ENCODE measurements at regions of chr3 and their contacts with region 1.

Region 1: DNA sequence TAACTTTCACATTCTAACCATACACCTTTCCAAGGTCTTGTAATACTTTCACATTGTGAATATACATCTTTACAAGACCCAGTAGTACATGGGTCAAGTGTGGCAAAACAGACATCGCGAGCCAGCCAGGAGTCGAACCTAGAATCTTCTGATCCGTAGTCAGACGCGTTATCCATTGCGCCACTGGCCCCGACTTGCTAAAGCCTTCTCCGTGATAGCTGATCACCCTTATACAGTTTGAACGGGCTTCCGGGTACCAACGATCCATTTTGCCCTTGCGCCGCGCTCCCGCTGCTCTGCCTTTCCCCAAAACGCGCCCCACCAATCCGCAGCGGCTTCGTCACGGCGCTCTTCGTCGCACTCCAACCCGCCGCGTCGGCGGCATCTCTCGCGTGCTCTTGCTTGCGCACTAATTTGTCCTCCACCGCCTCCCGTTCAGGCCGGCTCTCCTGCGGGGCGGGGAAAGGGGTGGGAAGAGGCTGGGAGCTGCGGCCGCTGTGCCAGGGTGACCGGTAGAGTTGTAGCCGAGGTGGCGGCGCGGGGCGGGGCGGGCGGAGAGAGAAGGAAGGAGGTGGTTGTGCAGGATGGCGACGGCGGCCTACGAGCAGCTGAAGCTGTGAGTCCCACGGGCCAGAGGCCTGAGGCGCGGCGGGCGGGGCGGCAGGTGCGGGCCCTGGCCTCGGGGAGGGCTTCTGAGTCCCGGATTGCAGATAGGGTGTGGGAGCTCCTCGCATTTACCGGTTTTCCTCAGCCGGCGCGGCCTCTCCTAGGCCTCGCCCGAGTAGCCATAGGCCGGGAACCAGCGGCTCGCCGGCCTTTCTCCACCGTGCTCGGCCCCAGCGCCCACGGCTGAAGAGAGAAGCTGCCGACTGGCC is at the start of gene SACM1L:
- DNase-seq: peak; percentile 84 to 97 (median 95)
- ATAC-seq: peak; percentile 90
- H3K4me3 ChIP-seq: peak within 1 kb of the TSS; percentile 80
- H3K4me3 Mint-ChIP-seq: peak within 1 kb of the TSS; percentile 87 to 98 (median 95)
- H3K27ac ChIP-seq: peak within 1 kb of the TSS; percentile 96
- H3K27ac Mint-ChIP-seq: peak within 1 kb of the TSS; percentile 96 to 100 (median 99)
- H3K4me1 ChIP-seq: peaks cover 38 to 39% of the 10 kb centered on the region in 2 donors
- H3K4me1 Mint-ChIP-seq: peaks cover 40 to 74% (median 67%) of the 10 kb centered on the region in 7 donors
- H3K27me3 ChIP-seq: no peaks in the 10 kb centered on the region
- H3K27me3 Mint-ChIP-seq: peaks cover 0 to 5% (median 0%) of the 10 kb centered on the region in 5 donors
- total RNA-seq, gene SACM1L: 60.8 to 93.8 (median 70.5) TPM

Region 2: GRCh38 chr3:44861412-44862220 is 827.5 kb before region 1 on chr3 and contains the start of gene TMEM42:
- CTCF ChIA-PET with region 1: no interaction called
- POLR2A ChIA-PET with region 1: no interaction called
- intact Hi-C with region 1: loop called in 1 of 2 experiments (anchors 10 kb)
- DNase-seq: peak; percentile 81 to 89 (median 84)
- ATAC-seq: peak; percentile 97
- H3K4me3 ChIP-seq: peak within 1 kb of the TSS; percentile 78
- H3K4me3 Mint-ChIP-seq: peak within 1 kb of the TSS; percentile 88 to 92 (median 91)
- H3K27ac ChIP-seq: peak within 1 kb of the TSS; percentile 76
- H3K27ac Mint-ChIP-seq: peak within 1 kb of the TSS; percentile 86 to 97 (median 92)
- H3K4me1 ChIP-seq: peaks cover 15 to 29% of the 10 kb centered on the region in 2 donors
- H3K4me1 Mint-ChIP-seq: peaks cover 23 to 48% (median 43%) of the 10 kb centered on the region in 7 donors
- H3K27me3 ChIP-seq: no peaks in the 10 kb centered on the region
- H3K27me3 Mint-ChIP-seq: no peaks in the 10 kb centered on the region
- total RNA-seq, gene TMEM42: 12.1 to 25.1 (median 16.4) TPM

Region 3: DNA sequence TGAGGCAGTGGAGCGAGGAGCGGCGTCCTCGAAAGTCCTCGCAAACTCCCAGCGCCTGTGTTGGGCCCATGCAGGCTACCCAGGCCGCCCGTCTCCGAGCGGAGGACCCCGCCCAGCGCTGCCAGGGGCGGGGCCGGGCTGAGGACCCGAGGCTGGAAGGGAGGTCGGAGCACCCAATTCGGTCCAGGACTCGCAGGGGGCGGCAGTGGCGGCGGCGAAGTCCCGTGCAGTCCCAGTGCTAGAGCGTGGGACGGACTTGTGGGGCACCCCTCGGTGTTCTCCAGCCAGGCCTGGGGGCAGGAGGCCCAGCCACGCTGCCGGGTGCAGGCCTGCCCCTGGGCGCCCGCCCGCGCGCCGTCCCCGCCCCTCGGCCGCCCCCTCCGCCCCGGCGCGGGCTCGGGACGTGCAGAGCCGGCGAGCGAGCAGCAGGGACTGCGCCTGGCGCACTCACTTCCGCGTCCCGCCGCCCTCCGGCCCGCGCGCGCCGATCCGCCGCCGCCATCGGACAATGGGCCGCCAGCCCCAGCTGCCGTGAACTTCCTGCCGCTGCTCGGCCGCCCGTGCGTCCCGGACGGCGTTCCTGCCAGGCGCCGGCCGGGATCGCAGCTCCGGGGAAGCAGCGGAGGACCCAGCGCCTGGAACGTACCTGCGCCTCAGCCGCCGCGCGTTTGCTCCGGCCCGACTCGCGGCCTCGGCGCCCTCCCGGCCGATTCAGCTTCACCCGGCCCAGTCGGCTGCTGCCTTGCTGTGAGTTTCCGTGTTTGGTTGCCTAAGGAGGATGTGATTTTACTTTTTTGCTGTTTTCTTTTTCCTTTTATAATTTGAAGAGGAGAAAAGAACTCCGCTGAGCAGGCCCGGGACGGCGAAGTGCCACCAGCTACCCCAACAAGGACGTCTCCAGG is 95.2 kb before region 1 on chr3:
- CTCF ChIA-PET with region 1: no interaction called
- POLR2A ChIA-PET with region 1: interaction called, 3 read pairs
- intact Hi-C with region 1: loop called (anchors 1 kb)
- DNase-seq: peak; percentile 46 to 83 (median 70)
- ATAC-seq: peak; percentile 83
- H3K4me3 ChIP-seq: peak overlapping the region; percentile 71
- H3K4me3 Mint-ChIP-seq: peak overlapping the region; percentile 84 to 99 (median 90)
- H3K27ac ChIP-seq: peak overlapping the region; percentile 72
- H3K27ac Mint-ChIP-seq: peak overlapping the region; percentile 85 to 96 (median 91)
- H3K4me1 ChIP-seq: peaks cover 44 to 58% of the 10 kb centered on the region in 2 donors
- H3K4me1 Mint-ChIP-seq: peaks cover 48 to 61% (median 55%) of the 10 kb centered on the region in 7 donors
- H3K27me3 ChIP-seq: no peaks in the 10 kb centered on the region
- H3K27me3 Mint-ChIP-seq: peaks cover 0 to 3% (median 0%) of the 10 kb centered on the region in 5 donors

Region 4: GRCh38 chr3:45635477-45636256 is 53.5 kb before region 1 on chr3:
- CTCF ChIA-PET with region 1: no interaction called
- POLR2A ChIA-PET with region 1: no interaction called
- intact Hi-C with region 1: no loop called
- DNase-seq: no peak
- ATAC-seq: no peak
- H3K4me3 ChIP-seq: no peak overlapping the region
- H3K4me3 Mint-ChIP-seq: no peak overlapping the region
- H3K27ac ChIP-seq: no peak overlapping the region
- H3K27ac Mint-ChIP-seq: peak overlapping the region in 4 of 9 donors; percentile 12 to 40 (median 29)
- H3K4me1 ChIP-seq: peaks cover 0 to 4% of the 10 kb centered on the region in 2 donors
- H3K4me1 Mint-ChIP-seq: peaks cover 12 to 22% (median 17%) of the 10 kb centered on the region in 7 donors
- H3K27me3 ChIP-seq: no peaks in the 10 kb centered on the region
- H3K27me3 Mint-ChIP-seq: no peaks in the 10 kb centered on the region

Region 5: DNA sequence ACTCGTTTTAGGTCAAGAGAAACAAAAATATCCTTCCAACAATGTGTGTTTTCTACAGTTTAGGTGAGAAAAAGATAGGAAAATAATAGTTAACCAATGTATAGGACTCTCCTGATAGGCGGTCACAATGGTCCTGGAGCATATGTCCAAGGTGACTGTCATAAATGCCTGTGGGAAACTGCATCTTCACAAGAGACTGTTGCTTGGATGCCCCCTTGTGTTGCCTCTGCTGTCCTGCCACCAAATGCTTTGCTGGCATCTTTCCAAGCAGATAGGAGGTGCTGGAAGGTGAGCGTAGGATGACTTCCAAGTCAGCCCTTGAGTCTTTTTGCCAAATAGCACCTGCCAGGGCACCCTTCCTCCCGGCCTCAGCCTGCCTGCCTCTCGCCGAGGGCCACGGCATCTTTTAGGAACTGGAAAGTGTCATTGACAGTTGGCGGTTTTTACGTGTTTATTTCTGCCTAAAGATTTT is 24.0 kb before region 1 on chr3:
- CTCF ChIA-PET with region 1: interaction called, 22 read pairs
- POLR2A ChIA-PET with region 1: interaction called, 31 read pairs
- intact Hi-C with region 1: loop called (anchors 1 kb)
- DNase-seq: peak in 8 of 9 donors; percentile 49 to 79 (median 75)
- ATAC-seq: peak; percentile 74
- H3K4me3 ChIP-seq: peak overlapping the region; percentile 64
- H3K4me3 Mint-ChIP-seq: peak overlapping the region; percentile 80 to 96 (median 89)
- H3K27ac ChIP-seq: peak overlapping the region; percentile 81
- H3K27ac Mint-ChIP-seq: peak overlapping the region; percentile 85 to 97 (median 92)
- H3K4me1 ChIP-seq: peaks cover 13 to 19% of the 10 kb centered on the region in 2 donors
- H3K4me1 Mint-ChIP-seq: peaks cover 15 to 49% (median 33%) of the 10 kb centered on the region in 7 donors
- H3K27me3 ChIP-seq: no peaks in the 10 kb centered on the region
- H3K27me3 Mint-ChIP-seq: no peaks in the 10 kb centered on the region

Region 6: DNA sequence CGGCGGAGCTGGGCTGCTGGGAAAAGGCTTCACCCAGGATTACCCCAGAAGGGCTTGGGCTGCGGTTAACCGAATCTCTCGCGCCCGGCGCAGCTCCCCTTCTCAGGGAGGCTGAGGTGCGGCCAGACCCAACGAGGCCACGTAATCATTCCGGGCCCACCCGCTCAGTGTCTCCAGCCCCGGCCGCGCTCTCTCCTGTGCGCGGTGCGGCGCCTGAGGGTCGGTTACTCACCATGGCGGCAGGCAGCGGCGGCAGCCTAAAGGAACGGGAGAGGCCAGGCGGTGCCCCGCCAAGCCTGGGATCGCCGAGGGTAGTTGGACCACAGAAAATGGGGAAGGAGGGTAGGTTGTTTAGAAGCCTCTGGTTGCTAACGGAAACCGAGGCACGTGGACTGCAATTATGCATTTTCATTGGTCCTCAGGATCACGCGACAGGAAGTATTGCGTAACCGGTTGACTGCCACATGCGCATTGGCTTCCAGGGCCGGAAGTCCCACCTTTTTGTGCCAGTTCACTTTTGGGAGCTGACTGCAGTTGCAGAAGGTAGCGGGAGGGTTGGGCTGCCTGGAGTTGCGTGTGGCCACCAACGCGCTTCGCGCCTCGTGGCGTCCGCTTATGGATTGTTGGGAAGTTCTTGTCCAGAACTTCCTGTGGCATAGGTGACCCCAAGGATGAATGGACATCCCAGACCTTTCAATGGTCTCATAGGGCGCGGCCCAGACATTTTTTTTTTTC is 152.8 kb after region 1 on chr3 and contains the start of gene LZTFL1:
- CTCF ChIA-PET with region 1: interaction called, 3 read pairs
- POLR2A ChIA-PET with region 1: no interaction called
- intact Hi-C with region 1: loop called (anchors 1 to 2 kb)
- DNase-seq: peak; percentile 62 to 94 (median 91)
- ATAC-seq: peak; percentile 94
- H3K4me3 ChIP-seq: peak within 1 kb of the TSS; percentile 77
- H3K4me3 Mint-ChIP-seq: peak within 1 kb of the TSS; percentile 90 to 97 (median 94)
- H3K27ac ChIP-seq: peak within 1 kb of the TSS; percentile 88
- H3K27ac Mint-ChIP-seq: peak within 1 kb of the TSS; percentile 86 to 98 (median 94)
- H3K4me1 ChIP-seq: peaks cover 8 to 13% of the 10 kb centered on the region in 2 donors
- H3K4me1 Mint-ChIP-seq: peaks cover 6 to 41% (median 25%) of the 10 kb centered on the region in 7 donors
- H3K27me3 ChIP-seq: no peaks in the 10 kb centered on the region
- H3K27me3 Mint-ChIP-seq: peaks cover 0 to 65% (median 0%) of the 10 kb centered on the region in 5 donors
- total RNA-seq, gene LZTFL1: 8.5 to 15.7 (median 12.6) TPM

Region 7: GRCh38 chr3:46378426-46378942 is 689.4 kb after region 1 on chr3:
- CTCF ChIA-PET with region 1: no interaction called
- POLR2A ChIA-PET with region 1: no interaction called
- intact Hi-C with region 1: loop called in 1 of 2 experiments (anchors 10 kb)
- DNase-seq: peak; percentile 24 to 67 (median 46)
- ATAC-seq: peak; percentile 68
- H3K4me3 ChIP-seq: no peak overlapping the region
- H3K4me3 Mint-ChIP-seq: peak overlapping the region in 1 of 10 donors; percentile 8
- H3K27ac ChIP-seq: no peak overlapping the region
- H3K27ac Mint-ChIP-seq: peak overlapping the region in 2 of 9 donors; percentile 0 to 4
- H3K4me1 ChIP-seq: peaks cover 3 to 40% of the 10 kb centered on the region in 2 donors
- H3K4me1 Mint-ChIP-seq: peaks cover 23 to 48% (median 43%) of the 10 kb centered on the region in 7 donors
- H3K27me3 ChIP-seq: no peaks in the 10 kb centered on the region
- H3K27me3 Mint-ChIP-seq: peaks cover 0 to 24% (median 0%) of the 10 kb centered on the region in 5 donors